Sigmoid colon (tissue), 7 donors: ENCODE measurements at regions of chr7 and their contacts with region 1.

Region 1: DNA sequence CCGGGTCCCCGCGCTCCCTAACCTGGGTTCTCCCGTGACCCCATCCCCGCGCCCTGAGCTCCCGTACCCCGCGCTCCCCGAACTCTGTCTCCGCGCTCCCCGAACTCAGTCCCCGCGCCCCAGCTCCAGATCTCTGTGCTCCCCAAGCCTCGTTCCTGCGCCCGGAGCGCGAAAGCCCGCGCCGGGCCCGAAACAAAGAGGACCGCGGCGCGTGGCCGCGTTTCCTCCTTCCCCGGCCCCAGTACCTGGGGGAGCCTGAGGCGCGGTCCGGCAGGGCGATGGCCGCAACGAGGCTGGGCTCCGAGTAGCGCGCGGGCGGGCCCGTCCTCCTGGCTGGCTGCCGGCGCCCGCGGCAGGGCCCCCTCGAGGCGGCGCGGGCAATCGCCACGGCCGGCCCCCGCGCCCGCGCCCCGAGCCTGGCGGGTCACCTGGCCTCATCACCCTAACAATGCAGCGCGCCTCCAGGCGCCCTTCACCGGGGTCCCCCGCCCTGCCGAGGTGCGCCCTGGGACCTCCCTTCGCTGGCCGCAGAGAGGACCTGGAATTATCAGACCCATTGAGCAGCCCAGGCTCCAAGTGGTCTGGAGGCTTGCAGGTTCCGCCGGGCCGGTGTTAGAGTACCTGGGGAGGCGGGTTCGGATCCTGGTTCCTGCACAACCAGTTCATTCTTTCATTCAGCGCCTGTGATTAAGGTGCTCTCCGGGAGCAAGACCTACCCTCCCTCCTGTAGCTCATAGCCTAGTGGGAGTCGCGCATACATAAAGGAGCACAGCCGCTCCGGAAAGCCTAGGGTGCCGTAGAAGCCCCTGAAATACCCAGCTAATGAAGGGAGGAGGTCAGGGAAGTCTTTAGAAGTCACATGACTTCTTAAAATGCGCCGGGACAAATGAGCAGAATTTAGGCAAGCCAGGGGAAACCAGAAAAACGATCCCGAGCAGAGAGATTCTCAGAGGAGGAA is at the start of gene TNS3:
- DNase-seq: no peak
- H3K4me3 ChIP-seq: peak within 1 kb of the TSS; percentile 74 to 93 (median 82)
- H3K27ac ChIP-seq: peak within 1 kb of the TSS; percentile 79 to 87 (median 82)
- H3K4me1 ChIP-seq: peaks cover 0 to 54% (median 43%) of the 10 kb centered on the region in 4 donors
- H3K27me3 ChIP-seq: no peaks in the 10 kb centered on the region
- CTCF ChIP-seq: peak in 1 of 4 experiments; percentile 15
- EP300 ChIP-seq: no peak
- POLR2A ChIP-seq: no peak
- total RNA-seq, gene TNS3: 17.8 to 43.8 (median 28.2) TPM

Region 2: GRCh38 chr7:47453093-47454049 is 128.7 kb before region 1 on chr7:
- intact Hi-C with region 1: loop called (anchors 5 kb)
- DNase-seq: peak; percentile 89
- H3K4me3 ChIP-seq: peak overlapping the region in 1 of 4 donors; percentile 16
- H3K27ac ChIP-seq: peak overlapping the region; percentile 52 to 70 (median 61)
- H3K4me1 ChIP-seq: peaks cover 0 to 59% (median 51%) of the 10 kb centered on the region in 4 donors
- H3K27me3 ChIP-seq: no peaks in the 10 kb centered on the region
- CTCF ChIP-seq: no peak
- EP300 ChIP-seq: no peak
- POLR2A ChIP-seq: no peak

Region 3: GRCh38 chr7:47497367-47498096 is 84.6 kb before region 1 on chr7:
- intact Hi-C with region 1: loop called (anchors 5 kb)
- DNase-seq: no peak
- H3K4me3 ChIP-seq: no peak overlapping the region
- H3K27ac ChIP-seq: peak overlapping the region; percentile 19 to 75 (median 74)
- H3K4me1 ChIP-seq: peaks cover 0 to 88% (median 80%) of the 10 kb centered on the region in 4 donors
- H3K27me3 ChIP-seq: no peaks in the 10 kb centered on the region
- CTCF ChIP-seq: no peak
- EP300 ChIP-seq: no peak
- POLR2A ChIP-seq: no peak

Region 4: DNA sequence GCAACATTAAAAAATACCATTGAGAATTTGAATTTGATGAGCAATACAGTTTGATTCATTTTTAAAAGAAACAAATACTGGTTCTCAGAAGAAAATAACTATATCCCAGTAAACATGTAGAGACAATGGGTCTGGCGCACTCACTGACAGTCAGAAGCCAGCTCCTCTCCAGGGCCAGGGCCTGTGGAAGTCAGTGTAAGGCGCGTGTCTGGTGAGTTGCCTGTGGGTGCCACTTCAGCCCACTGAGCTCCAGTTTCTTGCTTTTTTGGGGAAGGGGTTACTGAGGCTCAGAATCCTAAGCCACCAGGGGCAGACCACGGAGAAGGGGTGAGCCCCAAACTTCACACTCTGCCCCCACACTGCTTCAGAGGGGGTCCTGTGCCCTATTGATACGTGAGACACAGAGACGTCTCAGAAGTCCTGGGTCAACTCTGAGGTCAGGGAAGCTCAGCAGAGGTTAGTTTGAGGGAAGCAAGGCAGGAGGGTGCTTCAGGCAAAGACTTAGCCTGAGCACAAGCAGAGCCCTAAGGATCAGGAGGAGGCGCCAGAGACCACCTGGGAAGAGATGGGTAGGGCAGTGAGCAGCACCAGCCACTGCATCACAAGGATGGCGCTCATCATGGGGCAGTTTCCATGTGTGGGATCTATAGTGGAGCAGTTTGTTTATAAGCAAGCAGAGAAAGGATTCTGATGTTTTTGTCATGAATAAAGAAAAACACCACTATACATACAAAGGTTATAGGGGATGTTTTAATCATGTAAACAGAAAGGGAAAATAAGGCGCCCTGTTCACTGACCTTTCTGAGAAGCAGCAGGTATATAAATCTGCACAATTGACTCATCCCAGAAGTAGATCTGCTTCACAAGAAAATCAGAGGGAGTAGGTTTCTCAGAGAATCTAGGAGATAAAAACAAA is 270.5 kb after region 1 on chr7:
- intact Hi-C with region 1: no loop called
- DNase-seq: no peak
- H3K4me3 ChIP-seq: no peak overlapping the region
- H3K27ac ChIP-seq: no peak overlapping the region
- H3K4me1 ChIP-seq: no peaks in the 10 kb centered on the region
- H3K27me3 ChIP-seq: no peaks in the 10 kb centered on the region
- CTCF ChIP-seq: no peak
- EP300 ChIP-seq: no peak
- POLR2A ChIP-seq: no peak